ENCODE measurements at regions of chr19 and their contacts with region 1.

Region 1: GRCh38 chr19:43784981-43785808 is 4.4 kb upstream of the KCNN4 start:
- DNase-seq: peak in 2 of 3 donors; percentile 68 to 79
- ATAC-seq: peak; percentile 57
- H3K4me3 ChIP-seq: no peak overlapping the region
- H3K4me1 ChIP-seq: peaks cover 14% of the 10 kb centered on the region
- CTCF ChIP-seq: peak; percentile 97

Region 2: GRCh38 chr19:43700395-43701000 is 84.7 kb before region 1 on chr19:
- intact Hi-C with region 1: no loop called
- DNase-seq: peak; percentile 56 to 67 (median 57)
- ATAC-seq: peak; percentile 10
- H3K4me3 ChIP-seq: no peak overlapping the region
- H3K4me1 ChIP-seq: peaks cover 14% of the 10 kb centered on the region
- CTCF ChIP-seq: no peak

Region 3: DNA sequence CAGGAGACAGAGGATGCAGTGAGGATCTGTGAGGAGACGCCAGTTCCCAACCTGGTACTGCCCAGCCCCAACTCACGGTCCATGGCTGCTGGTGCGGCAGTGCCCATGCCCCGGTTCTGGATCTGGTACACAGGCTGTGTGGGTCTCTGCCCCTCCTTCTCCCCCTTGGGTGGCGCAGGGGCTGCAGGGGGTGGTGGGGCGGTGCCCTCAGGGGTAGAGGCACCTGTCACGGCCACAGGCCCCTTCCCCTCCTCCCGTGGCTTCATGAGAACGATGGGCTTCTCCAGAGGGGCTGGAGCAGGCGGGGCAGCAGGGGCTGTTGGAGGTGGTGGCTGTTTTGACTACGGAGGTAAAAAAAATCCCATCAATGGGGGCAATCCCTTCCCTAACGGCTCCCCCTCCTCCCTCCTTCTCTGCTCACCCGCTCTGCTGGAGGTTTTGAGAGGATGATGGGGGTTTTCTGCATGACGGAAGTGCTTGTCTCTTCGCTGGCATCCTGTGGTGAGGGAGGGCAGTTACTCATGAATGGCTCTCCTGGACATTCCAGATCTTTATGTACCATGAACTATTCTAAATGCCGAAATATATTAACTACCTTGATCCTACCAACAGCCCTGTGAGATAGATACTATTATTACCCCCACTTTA is 37.5 kb before region 1 on chr19:
- intact Hi-C with region 1: loop called (anchors 5 kb)
- DNase-seq: no peak
- ATAC-seq: no peak
- H3K4me3 ChIP-seq: no peak overlapping the region
- H3K4me1 ChIP-seq: peaks cover 10% of the 10 kb centered on the region
- CTCF ChIP-seq: no peak

Region 4: DNA sequence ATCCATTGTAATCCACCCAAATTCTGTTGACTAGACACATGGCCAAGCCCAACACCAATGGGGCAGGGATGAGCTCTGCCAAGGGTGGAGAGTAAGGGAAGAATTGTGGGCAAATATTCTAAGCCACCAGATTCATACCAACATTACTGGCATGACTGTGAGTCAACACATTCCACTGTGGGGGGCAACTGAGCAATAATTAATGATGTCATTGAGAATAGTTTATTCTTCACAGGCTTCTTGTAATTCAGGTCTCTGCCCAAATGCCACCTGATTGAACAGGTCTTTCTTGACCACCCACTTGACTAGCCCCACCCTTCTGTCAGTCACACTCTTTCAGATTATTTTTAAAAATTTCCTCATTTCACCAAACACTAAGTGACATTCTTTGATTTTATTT is 70.4 kb after region 1 on chr19:
- intact Hi-C with region 1: no loop called
- DNase-seq: no peak
- ATAC-seq: no peak
- H3K4me3 ChIP-seq: no peak overlapping the region
- H3K4me1 ChIP-seq: no peaks in the 10 kb centered on the region
- CTCF ChIP-seq: no peak

Measured in mucosa of descending colon (tissue), 3 donors.